Activated CD8-positive, alpha-beta T cell treated with anti-CD3 and anti-CD28 coated beads, Interleukin-2, amount 10 ng/mL, durations not matched to agents 7 days and 5 days (primary cell): ENCODE measurements at regions of chr1 and their contacts with region 1.

Region 1: DNA sequence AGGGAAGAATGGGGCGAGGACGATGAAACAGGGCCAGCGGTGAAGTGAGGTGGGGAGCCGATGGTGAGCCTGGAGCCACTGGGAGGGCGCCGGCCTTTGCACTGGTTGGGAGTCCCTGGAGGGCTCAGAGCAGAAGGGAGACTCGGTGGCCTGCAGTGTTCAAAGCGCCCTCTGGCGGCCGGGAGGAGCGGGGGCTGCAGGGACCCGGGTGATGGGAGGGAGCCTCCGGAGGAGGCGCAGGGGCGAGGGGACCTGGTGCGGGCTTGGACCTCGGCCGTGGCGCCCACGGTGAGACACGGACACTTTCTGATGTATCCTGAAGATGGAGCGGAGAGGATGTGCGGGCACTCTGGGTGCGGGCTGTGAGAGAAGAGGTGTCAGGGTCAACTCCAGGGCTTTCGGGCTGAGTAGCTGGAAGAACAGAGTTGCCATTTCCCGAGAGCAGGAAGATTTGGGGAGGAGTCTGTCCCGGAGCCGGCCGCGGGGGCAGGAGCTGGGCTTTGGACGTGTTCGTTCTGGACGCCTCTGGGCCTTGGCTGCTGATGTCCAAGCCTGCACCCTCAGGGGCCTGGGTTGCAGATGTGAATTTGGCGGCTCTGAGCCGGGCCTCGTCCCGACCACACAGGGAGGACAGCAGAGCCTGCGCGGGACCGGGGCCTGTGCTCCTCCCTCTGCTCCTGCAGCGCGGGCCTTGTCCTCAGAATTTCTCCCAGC is 29.7 kb downstream of the HEYL start:
- DNase-seq: peak; percentile 72
- ATAC-seq: peak; percentile 90
- H3K4me3 Mint-ChIP-seq: no peak overlapping the region
- H3K27ac Mint-ChIP-seq: no peak overlapping the region
- H3K4me1 Mint-ChIP-seq: peaks cover 8% of the 10 kb centered on the region
- H3K27me3 Mint-ChIP-seq: peaks cover 12% of the 10 kb centered on the region

Region 2: GRCh38 chr1:39494671-39495410 is 114.9 kb before region 1 on chr1:
- CTCF ChIA-PET with region 1: no interaction called
- POLR2A ChIA-PET with region 1: no interaction called
- DNase-seq: no peak
- ATAC-seq: no peak
- H3K4me3 Mint-ChIP-seq: no peak overlapping the region
- H3K27ac Mint-ChIP-seq: no peak overlapping the region
- H3K4me1 Mint-ChIP-seq: peaks cover 10% of the 10 kb centered on the region
- H3K27me3 Mint-ChIP-seq: peaks cover 35% of the 10 kb centered on the region

Region 3: GRCh38 chr1:39566441-39567137 is 43.2 kb before region 1 on chr1:
- CTCF ChIA-PET with region 1: no interaction called
- POLR2A ChIA-PET with region 1: no interaction called
- DNase-seq: no peak
- ATAC-seq: no peak
- H3K4me3 Mint-ChIP-seq: no peak overlapping the region
- H3K27ac Mint-ChIP-seq: no peak overlapping the region
- H3K4me1 Mint-ChIP-seq: peaks cover 11% of the 10 kb centered on the region
- H3K27me3 Mint-ChIP-seq: no peaks in the 10 kb centered on the region

Region 4: DNA sequence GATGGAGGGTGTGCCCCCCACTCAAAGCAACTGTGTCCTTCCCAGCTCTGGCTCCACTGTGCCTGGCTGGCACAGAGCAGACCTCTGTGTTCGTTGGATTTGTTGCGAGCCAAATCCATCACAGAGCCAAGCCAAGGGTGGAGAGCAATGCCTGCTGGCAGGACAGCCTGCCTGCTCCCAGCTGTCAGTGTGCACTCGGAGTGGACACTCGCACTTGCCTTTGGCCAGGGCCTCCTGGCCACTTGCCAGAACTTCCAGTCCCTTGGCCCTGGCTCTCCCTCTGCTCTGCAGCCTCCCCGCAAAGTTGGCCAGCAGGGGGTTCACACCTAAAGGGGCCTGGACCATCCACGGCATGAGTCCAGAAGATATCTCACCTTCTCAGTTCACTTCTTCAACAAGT is 13.3 kb after region 1 on chr1:
- CTCF ChIA-PET with region 1: interaction called, 14 read pairs
- POLR2A ChIA-PET with region 1: no interaction called
- DNase-seq: no peak
- ATAC-seq: no peak
- H3K4me3 Mint-ChIP-seq: no peak overlapping the region
- H3K27ac Mint-ChIP-seq: no peak overlapping the region
- H3K4me1 Mint-ChIP-seq: no peaks in the 10 kb centered on the region
- H3K27me3 Mint-ChIP-seq: peaks cover 14% of the 10 kb centered on the region

Region 5: GRCh38 chr1:39666772-39667171 is 57.0 kb after region 1 on chr1:
- CTCF ChIA-PET with region 1: interaction called, 35 read pairs
- POLR2A ChIA-PET with region 1: no interaction called
- DNase-seq: peak; percentile 42
- ATAC-seq: peak; percentile 47
- H3K4me3 Mint-ChIP-seq: no peak overlapping the region
- H3K27ac Mint-ChIP-seq: no peak overlapping the region
- H3K4me1 Mint-ChIP-seq: peaks cover 24% of the 10 kb centered on the region
- H3K27me3 Mint-ChIP-seq: peaks cover 14% of the 10 kb centered on the region

Region 6: DNA sequence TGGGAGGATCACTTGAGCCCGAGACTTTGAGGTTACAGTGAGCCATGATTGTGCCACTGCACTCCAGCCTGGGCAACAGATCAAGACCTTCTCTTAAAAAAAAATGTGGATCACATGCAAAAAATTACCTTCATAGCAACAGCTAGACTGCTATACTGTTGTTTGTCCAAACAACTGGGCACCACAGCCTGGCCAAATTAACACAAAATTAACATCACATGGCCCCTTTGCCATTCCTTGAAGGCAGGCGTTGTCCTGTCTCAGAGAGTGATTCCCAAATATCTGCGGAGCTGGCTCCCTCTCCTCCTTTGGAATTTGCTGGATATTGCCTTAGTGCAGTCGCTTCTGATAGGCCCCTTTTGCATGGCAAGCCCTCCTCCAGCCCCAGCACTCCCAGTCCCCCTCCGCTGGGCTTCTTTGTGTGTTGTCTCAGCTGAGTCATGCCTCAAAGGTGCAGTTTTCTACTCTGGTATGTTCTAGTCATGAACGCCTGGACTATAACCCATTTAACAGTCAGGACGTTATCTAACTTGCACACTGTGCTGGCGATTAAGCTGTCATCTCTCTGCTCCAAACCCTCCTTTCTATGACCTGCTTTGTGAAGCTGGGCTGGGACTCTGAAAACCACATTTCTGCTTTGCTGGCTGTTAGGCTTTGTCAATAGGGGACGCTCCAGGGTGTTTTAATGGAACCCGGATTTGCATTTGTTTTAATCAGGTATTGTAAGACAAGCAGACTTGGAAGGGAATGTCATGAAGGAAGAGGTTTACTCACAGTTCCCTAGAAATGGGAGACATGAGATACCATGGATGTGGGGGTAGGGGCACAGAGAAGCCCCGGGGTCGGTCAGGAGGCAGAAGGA is 101.6 kb after region 1 on chr1:
- CTCF ChIA-PET with region 1: interaction called, 15 read pairs
- POLR2A ChIA-PET with region 1: no interaction called
- DNase-seq: no peak
- ATAC-seq: no peak
- H3K4me3 Mint-ChIP-seq: no peak overlapping the region
- H3K27ac Mint-ChIP-seq: no peak overlapping the region
- H3K4me1 Mint-ChIP-seq: no peaks in the 10 kb centered on the region
- H3K27me3 Mint-ChIP-seq: peaks cover 26% of the 10 kb centered on the region

Region 7: GRCh38 chr1:39727221-39727931 is 117.6 kb after region 1 on chr1:
- CTCF ChIA-PET with region 1: interaction called, 17 read pairs
- POLR2A ChIA-PET with region 1: no interaction called
- DNase-seq: peak; percentile 15
- ATAC-seq: no peak
- H3K4me3 Mint-ChIP-seq: no peak overlapping the region
- H3K27ac Mint-ChIP-seq: no peak overlapping the region
- H3K4me1 Mint-ChIP-seq: peaks cover 9% of the 10 kb centered on the region
- H3K27me3 Mint-ChIP-seq: peaks cover 66% of the 10 kb centered on the region